A673 (cell line): ENCODE measurements at regions of chr13 and their contacts with region 1.

Region 1: GRCh38 chr13:64154514-64154913 is 2738.9 kb upstream of the PCDH20 start:
- DNase-seq: peak; percentile 70
- H3K4me3 ChIP-seq: no peak overlapping the region
- H3K27ac ChIP-seq: no peak overlapping the region
- H3K4me1 ChIP-seq: peaks cover 17% of the 10 kb centered on the region
- H3K27me3 ChIP-seq: no peaks in the 10 kb centered on the region
- CTCF ChIP-seq: peak; percentile 63

Region 2: GRCh38 chr13:64061649-64062048 is 92.9 kb before region 1 on chr13:
- CTCF ChIA-PET with region 1: no interaction called
- POLR2A ChIA-PET with region 1: no interaction called
- intact Hi-C with region 1: no loop called
- DNase-seq: no peak
- H3K4me3 ChIP-seq: no peak overlapping the region
- H3K27ac ChIP-seq: peak overlapping the region; percentile 33
- H3K4me1 ChIP-seq: peaks cover 21% of the 10 kb centered on the region
- H3K27me3 ChIP-seq: no peaks in the 10 kb centered on the region
- CTCF ChIP-seq: no peak

Region 3: GRCh38 chr13:64453831-64454230 is 299.3 kb after region 1 on chr13:
- CTCF ChIA-PET with region 1: no interaction called
- POLR2A ChIA-PET with region 1: no interaction called
- intact Hi-C with region 1: loop called (anchors 10 kb)
- DNase-seq: peak; percentile 62
- H3K4me3 ChIP-seq: no peak overlapping the region
- H3K27ac ChIP-seq: no peak overlapping the region
- H3K4me1 ChIP-seq: peaks cover 7% of the 10 kb centered on the region
- H3K27me3 ChIP-seq: no peaks in the 10 kb centered on the region
- CTCF ChIP-seq: no peak

Region 4: GRCh38 chr13:64551755-64552154 is 397.2 kb after region 1 on chr13:
- CTCF ChIA-PET with region 1: no interaction called
- POLR2A ChIA-PET with region 1: no interaction called
- intact Hi-C with region 1: loop called (anchors 10 kb)
- DNase-seq: peak; percentile 78
- H3K4me3 ChIP-seq: no peak overlapping the region
- H3K27ac ChIP-seq: no peak overlapping the region
- H3K4me1 ChIP-seq: no peaks in the 10 kb centered on the region
- H3K27me3 ChIP-seq: no peaks in the 10 kb centered on the region
- CTCF ChIP-seq: no peak

Region 5: DNA sequence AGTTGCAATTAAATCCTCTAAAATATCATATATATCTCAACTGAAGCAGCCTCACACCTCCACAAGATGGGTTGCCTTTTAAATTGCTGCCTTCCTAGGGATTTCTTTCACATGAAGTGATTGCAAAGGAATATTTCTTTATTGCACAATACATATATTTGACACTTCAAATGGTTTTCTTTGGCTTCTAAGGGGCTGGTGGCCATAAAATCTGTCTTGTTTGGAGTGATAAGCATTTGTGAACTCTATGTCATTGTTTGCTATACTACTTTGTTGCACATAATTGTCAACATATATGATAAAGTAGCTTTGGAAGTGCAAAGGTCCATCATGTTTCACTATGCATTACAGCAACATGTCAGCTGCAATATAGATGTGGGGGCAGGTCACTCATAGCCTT is 694.7 kb after region 1 on chr13:
- CTCF ChIA-PET with region 1: no interaction called
- POLR2A ChIA-PET with region 1: no interaction called
- intact Hi-C with region 1: no loop called
- DNase-seq: no peak
- H3K4me3 ChIP-seq: no peak overlapping the region
- H3K27ac ChIP-seq: no peak overlapping the region
- H3K4me1 ChIP-seq: no peaks in the 10 kb centered on the region
- H3K27me3 ChIP-seq: no peaks in the 10 kb centered on the region
- CTCF ChIP-seq: no peak